ENCODE measurements at regions of chr9 and their contacts with region 1.

Region 1: DNA sequence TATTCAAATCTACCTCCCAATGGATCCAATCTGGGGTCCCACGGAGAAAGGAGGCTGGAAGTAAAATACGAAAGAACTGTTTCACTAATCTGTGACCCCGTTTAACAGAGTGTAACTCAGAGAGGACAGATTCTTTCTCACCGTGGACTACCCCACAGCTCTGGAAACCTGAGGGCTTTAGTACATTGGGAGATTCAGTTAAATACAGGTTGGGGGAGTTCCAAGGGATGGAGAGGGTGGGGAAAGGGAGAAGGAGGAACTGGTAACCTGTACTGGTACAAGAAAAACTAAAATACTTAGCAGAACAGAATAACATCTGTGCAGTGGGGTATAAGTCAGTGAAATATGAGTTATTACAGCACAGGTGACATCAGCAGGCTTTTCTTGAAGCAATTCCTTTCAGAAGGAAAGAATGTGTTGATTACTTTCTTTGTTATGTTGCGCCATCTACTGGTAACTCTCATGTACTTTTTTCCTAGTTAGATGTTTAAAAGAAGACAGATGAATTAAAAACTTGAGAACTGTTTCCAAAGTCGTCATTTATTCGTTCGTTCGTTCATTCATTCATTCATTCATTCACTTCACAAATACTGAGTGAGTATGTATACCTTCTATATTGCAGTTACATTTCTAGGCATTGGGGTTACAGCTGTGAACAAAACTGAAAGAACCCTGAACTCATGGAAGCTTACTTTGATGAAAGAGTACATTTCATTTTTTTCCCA is 30.0 kb upstream of the STOM start:
- DNase-seq: no peak
- ATAC-seq: peak; percentile 75
- H3K4me3 Mint-ChIP-seq: no peak overlapping the region
- H3K27ac Mint-ChIP-seq: no peak overlapping the region
- H3K4me1 Mint-ChIP-seq: no peaks in the 10 kb centered on the region
- H3K27me3 Mint-ChIP-seq: no peaks in the 10 kb centered on the region

Region 2: GRCh38 chr9:120985810-120986222 is 414.2 kb before region 1 on chr9:
- CTCF ChIA-PET with region 1: no interaction called
- POLR2A ChIA-PET with region 1: no interaction called
- intact Hi-C with region 1: loop called in 1 of 2 experiments (anchors 10 kb)
- DNase-seq: no peak
- ATAC-seq: no peak
- H3K4me3 Mint-ChIP-seq: no peak overlapping the region
- H3K27ac Mint-ChIP-seq: no peak overlapping the region
- H3K4me1 Mint-ChIP-seq: peaks cover 2% of the 10 kb centered on the region
- H3K27me3 Mint-ChIP-seq: no peaks in the 10 kb centered on the region

Region 3: GRCh38 chr9:121213136-121213806 is 186.8 kb before region 1 on chr9:
- CTCF ChIA-PET with region 1: interaction called, 44 read pairs
- POLR2A ChIA-PET with region 1: no interaction called
- intact Hi-C with region 1: loop called (anchors 1 to 2 kb)
- DNase-seq: peak; percentile 87
- ATAC-seq: peak; percentile 89
- H3K4me3 Mint-ChIP-seq: no peak overlapping the region
- H3K27ac Mint-ChIP-seq: no peak overlapping the region
- H3K4me1 Mint-ChIP-seq: peaks cover 7% of the 10 kb centered on the region
- H3K27me3 Mint-ChIP-seq: no peaks in the 10 kb centered on the region

Region 4: DNA sequence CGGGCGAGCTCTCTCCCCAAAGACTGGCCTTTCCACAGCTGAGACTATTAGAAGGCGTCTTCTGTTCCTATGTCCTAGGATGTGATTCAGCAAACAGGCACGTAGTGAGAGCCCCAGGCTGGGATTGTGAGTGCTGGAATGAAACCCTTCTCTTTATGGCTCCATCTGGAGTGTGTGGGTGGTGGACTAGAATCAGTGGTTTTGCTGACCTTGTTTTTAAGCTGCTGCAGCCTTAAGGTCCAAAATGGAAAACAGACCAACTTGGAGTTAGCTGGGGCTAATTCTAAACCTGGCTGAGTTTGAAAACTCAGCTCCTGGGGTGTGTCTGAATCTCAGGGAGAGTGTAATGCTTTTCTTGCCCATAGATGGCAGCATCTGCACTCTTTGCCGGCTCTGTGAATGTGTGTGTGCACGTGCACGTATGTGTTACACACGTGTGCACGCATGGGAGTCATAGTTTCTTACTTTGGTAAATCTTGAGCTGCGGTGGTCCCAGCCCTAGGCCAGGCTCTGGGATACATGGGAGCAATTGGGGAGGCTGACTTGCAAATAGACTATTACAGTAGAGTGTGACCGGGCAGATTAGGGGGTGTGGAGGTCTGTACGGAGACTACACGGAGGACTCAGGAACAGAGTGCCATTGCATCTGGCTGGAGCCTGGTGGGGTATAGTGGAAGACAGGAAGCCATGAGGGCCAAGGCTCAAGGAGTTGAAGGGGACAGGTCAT is 121.3 kb before region 1 on chr9:
- CTCF ChIA-PET with region 1: interaction called, 17 read pairs
- POLR2A ChIA-PET with region 1: no interaction called
- intact Hi-C with region 1: loop called in 1 of 2 experiments (anchors 1 kb)
- DNase-seq: peak; percentile 76
- ATAC-seq: peak; percentile 96
- H3K4me3 Mint-ChIP-seq: no peak overlapping the region
- H3K27ac Mint-ChIP-seq: no peak overlapping the region
- H3K4me1 Mint-ChIP-seq: peaks cover 11% of the 10 kb centered on the region
- H3K27me3 Mint-ChIP-seq: peaks cover 3% of the 10 kb centered on the region

Region 5: DNA sequence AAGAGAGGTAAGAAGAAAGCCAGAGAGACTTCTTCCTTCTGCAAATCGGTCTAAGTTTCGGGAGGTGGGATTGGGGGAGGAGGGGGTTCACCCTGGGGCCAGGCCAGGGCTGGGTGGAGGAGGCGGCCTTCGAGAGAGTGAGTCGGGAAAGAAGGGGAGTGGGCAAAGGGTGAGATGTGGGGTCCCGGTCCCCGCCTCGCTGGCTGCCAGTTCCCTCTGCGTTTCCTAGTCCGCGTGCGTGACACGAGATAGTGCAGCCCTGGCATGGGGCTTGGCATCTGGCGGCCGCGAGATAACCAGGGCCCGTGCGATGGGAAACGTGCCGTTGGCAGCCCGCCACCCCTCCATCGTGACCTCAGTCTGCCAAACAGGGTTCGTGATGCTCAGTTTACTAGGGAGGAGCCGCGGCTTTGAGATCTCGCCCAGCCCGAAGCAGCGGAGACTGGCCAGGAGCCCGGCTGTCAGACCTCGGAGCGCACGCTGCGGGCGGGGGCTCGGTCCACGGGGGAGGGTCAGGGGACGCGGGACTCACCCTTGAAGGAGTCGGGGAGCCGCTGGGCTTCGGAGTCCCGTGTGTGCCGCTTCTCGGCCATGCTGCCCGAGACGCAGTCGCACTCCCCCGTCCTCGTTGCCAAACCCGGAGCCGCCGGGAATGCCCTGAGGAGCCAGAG is 30.3 kb before region 1 on chr9 and contains the start of gene STOM:
- CTCF ChIA-PET with region 1: interaction called, 9 read pairs
- POLR2A ChIA-PET with region 1: no interaction called
- intact Hi-C with region 1: loop called in 1 of 2 experiments (anchors 2 kb)
- DNase-seq: peak; percentile 81
- ATAC-seq: peak; percentile 57
- H3K4me3 Mint-ChIP-seq: peak within 1 kb of the TSS; percentile 76
- H3K27ac Mint-ChIP-seq: peak within 1 kb of the TSS; percentile 95
- H3K4me1 Mint-ChIP-seq: peaks cover 27% of the 10 kb centered on the region
- H3K27me3 Mint-ChIP-seq: no peaks in the 10 kb centered on the region
- total RNA-seq, gene STOM: 34.7 to 44.5 TPM

Region 6: DNA sequence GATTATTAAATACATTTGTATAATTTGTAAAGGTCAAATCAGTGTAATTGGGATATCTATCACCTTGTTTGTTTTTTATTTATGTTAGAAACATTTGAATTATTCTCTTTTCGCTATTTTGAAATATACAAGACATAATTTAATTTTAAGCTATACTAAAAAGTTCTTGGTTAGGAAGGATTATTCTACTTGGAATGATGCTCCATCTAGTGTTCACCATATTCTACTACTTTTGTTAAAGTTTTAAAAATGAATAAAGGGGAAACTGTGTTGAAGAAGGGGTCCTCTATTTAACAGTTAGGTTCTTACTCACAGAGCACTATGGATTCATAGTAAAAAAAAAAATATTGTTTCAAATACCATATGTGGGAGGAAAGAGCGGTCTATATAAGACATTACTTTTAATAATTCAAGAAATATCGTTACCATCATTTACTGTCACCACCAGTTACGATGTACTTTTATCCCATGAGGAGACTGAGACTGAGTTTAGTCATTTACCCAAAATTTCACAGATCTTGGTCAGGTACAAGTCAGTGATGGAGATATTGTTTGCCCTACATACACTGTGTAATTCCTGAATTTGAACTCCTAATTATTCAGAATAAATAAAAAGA is 23.7 kb before region 1 on chr9:
- CTCF ChIA-PET with region 1: interaction called, 10 read pairs
- POLR2A ChIA-PET with region 1: no interaction called
- intact Hi-C with region 1: no loop called
- DNase-seq: no peak
- ATAC-seq: no peak
- H3K4me3 Mint-ChIP-seq: no peak overlapping the region
- H3K27ac Mint-ChIP-seq: no peak overlapping the region
- H3K4me1 Mint-ChIP-seq: no peaks in the 10 kb centered on the region
- H3K27me3 Mint-ChIP-seq: no peaks in the 10 kb centered on the region

Region 7: DNA sequence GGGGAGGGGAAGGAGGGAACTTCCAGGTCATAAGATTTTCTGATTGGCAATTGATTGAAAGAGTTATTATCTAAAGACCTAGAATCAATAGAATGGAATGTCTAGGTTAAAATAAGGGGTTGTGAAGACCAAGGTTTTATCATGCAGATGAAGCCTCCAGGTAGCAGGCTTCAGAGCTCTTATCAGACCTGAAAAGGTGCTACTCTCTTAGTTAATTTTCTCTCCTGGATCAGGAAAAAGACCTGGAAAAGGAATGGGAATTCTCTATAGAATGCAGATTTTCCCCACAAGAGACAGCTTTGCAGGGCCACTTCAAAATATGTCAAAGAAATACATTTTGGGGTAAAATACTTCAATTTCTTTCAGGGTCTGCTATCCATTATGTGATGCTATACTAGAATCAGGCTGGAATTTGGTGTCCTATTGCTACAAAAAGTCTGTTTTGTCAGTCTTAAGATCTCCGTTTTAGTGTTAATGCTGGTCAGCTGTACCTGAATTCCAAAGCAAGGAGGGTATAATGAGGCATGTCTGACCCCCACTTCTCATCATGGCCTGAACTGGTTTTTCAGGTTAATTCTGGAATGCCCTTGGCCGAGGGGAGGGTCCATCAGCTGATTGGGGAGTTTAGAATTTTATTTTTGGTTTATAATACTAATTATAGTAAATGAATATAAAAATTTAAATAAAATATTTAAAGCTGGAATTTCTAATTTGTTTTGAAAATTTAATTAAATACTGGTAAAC is 13.4 kb before region 1 on chr9:
- CTCF ChIA-PET with region 1: interaction called, 15 read pairs
- POLR2A ChIA-PET with region 1: no interaction called
- intact Hi-C with region 1: no loop called
- DNase-seq: no peak
- ATAC-seq: no peak
- H3K4me3 Mint-ChIP-seq: no peak overlapping the region
- H3K27ac Mint-ChIP-seq: no peak overlapping the region
- H3K4me1 Mint-ChIP-seq: no peaks in the 10 kb centered on the region
- H3K27me3 Mint-ChIP-seq: peaks cover 2% of the 10 kb centered on the region